B cell (primary cell): ENCODE measurements at regions of chr1 and their contacts with region 1.

Region 1: DNA sequence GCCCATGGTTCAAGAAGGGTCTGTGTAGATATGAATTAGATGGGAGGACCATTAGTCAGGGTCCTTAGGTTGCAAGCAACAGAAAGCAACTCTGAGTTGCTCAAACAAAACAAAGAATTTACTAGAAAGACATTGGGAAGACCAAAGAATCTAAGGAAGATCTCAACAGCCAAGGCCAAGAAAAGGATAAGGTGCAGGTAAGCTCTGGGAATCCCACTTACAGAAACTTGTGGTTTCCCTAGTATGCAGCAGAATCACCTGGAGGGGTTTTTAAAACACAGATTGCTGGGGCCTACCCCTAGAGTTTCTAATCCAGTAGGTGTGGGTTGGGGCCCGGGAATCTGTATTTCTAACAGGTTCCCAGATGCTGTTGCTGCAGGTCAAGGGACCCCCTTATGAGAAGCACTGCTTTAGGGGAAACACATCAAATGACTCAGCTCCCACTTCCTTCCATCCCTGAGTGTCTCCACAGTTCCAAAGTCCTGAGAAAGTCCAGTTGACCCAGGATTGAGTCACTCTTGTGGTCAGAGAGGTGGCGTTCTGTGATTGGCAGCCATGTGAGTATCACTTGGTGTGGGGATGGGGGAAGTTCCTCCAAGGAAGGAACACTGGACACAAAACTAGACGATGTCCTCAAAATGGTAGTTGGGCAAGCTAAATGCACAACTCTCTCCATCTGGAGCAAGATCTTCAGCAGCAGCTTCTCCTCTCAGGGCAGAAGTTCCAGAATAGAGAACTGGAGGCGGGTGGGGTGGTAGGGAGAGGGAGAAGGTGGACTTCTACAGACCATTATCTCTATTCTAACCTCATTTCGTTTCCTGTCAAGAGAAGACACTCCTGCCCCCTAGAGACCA is 24.2 kb upstream of the EYA3 start:
- DNase-seq: no peak
- ATAC-seq: no peak
- H3K4me3 ChIP-seq: no peak overlapping the region
- H3K4me3 Mint-ChIP-seq: no peak overlapping the region
- H3K27ac ChIP-seq: no peak overlapping the region
- H3K27ac Mint-ChIP-seq: no peak overlapping the region
- H3K4me1 ChIP-seq: peaks cover 15 to 18% of the 10 kb centered on the region in 2 donors
- H3K4me1 Mint-ChIP-seq: peaks cover 19% of the 10 kb centered on the region
- H3K27me3 ChIP-seq: no peaks in the 10 kb centered on the region
- H3K27me3 Mint-ChIP-seq: no peaks in the 10 kb centered on the region
- CTCF ChIP-seq: no peak

Region 2: GRCh38 chr1:28144203-28145135 is 31.9 kb after region 1 on chr1:
- CTCF ChIA-PET with region 1: no interaction called
- POLR2A ChIA-PET with region 1: interaction called, 4 read pairs
- intact Hi-C with region 1: loop called (anchors 1 kb)
- DNase-seq: peak; percentile 39
- ATAC-seq: peak; percentile 80
- H3K4me3 ChIP-seq: no peak overlapping the region
- H3K4me3 Mint-ChIP-seq: peak overlapping the region; percentile 36
- H3K27ac ChIP-seq: no peak overlapping the region
- H3K27ac Mint-ChIP-seq: peak overlapping the region; percentile 76
- H3K4me1 ChIP-seq: peaks cover 13 to 42% of the 10 kb centered on the region in 2 donors
- H3K4me1 Mint-ChIP-seq: peaks cover 40% of the 10 kb centered on the region
- H3K27me3 ChIP-seq: no peaks in the 10 kb centered on the region
- H3K27me3 Mint-ChIP-seq: no peaks in the 10 kb centered on the region
- CTCF ChIP-seq: no peak

Region 3: DNA sequence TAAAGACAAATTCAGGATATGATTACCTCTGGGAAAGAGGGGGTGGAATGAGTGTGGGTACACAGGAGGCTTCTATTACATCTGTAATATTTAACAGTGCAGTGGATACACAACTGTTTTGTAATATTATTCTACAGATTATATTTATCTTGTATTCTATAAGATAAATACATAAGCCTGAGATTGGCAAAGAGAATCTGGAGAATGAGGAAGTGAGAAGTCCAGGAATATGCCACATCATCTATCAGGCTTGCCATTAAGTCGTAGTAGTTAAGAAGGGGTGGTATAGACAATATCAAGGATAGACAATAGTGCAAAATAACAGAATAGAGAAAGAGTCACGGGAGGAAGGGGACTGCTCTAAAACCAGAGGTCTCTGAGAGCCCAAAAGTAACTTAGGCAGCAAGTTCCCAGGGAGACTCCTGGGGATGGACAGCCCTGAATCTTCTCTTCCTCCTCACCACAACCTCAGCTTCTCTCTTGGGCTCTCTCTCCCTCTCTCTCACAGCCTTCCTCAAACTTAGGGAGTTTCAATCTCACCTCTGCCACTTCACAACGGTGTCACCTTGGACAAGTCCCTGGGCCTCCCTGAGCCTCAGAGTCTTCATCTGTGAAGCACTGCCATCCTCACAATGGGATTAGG is 77.8 kb after region 1 on chr1:
- CTCF ChIA-PET with region 1: no interaction called
- POLR2A ChIA-PET with region 1: no interaction called
- intact Hi-C with region 1: no loop called
- DNase-seq: no peak
- ATAC-seq: no peak
- H3K4me3 ChIP-seq: no peak overlapping the region
- H3K4me3 Mint-ChIP-seq: no peak overlapping the region
- H3K27ac ChIP-seq: no peak overlapping the region
- H3K27ac Mint-ChIP-seq: no peak overlapping the region
- H3K4me1 ChIP-seq: no peaks in the 10 kb centered on the region
- H3K4me1 Mint-ChIP-seq: no peaks in the 10 kb centered on the region
- H3K27me3 ChIP-seq: no peaks in the 10 kb centered on the region
- H3K27me3 Mint-ChIP-seq: no peaks in the 10 kb centered on the region
- CTCF ChIP-seq: no peak